ENCODE measurements at regions of chr9 and their contacts with region 1.

Region 1: DNA sequence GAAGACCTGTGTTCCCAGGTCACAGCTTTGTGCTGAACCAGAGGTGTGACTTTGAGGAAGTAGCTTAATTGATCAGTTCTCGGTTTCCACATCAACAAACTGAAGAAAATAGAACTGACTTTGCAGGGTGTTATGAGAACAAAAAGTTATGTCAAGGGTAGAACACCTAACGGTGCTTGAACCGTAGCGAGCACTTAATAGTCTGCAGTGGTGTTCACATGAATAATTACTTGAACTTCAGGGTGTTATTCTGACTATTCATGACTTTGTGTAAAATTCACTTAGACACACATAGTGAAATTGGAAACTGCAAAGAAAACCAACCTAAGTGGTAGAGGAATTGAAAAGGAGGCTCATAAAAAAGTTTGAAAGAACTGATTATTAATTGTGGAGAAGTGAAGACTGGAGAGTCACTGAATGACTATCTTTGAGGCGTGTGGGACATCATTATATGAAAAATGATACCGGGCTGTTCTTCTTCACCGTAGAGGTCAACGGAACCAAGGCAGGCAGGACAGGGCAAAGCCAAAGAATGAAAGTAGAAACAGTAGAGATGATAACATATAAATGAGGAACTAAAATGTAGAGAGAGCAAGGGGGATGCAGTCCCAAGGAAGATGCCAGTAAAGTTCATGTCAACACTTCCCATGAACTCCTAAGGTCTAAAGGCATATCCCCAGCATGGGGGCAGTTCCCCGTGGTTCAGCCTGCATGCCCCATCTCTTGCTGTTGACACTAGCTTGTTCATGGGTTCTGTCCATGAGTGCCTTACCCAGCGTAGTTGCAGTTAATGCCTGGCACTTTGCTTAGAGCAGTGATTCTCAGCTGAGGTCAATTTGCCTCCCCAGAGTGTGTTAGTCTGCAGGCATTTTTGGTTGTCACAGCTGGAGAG is 118.7 kb downstream of the ZNF462 start:
- DNase-seq: peak; percentile 83
- ATAC-seq: peak; percentile 85
- H3K4me3 ChIP-seq: no peak overlapping the region
- H3K27ac ChIP-seq: peak overlapping the region; percentile 28; the same call in 1 of the 2 replicates
- H3K4me1 ChIP-seq: peaks cover 21% of the 10 kb centered on the region
- H3K27me3 ChIP-seq: no peaks in the 10 kb centered on the region; a peak in 1 of 4 replicates
- CTCF ChIP-seq: no peak
- EP300 ChIP-seq: peak; percentile 53 to 80; a peak in 3 of 4 replicates
- POLR2A ChIP-seq: no peak
- RAD21 ChIP-seq: no peak

Region 2: GRCh38 chr9:106753155-106753671 is 228.4 kb before region 1 on chr9:
- CTCF ChIA-PET with region 1: no interaction called
- POLR2A ChIA-PET with region 1: no interaction called
- RAD21 ChIA-PET with region 1: interaction called, 12 read pairs
- SMC1A ChIA-PET with region 1: interaction called, 5 read pairs
- in situ Hi-C with region 1: no loop called
- intact Hi-C with region 1: loop called (anchors 5 kb)
- DNase-seq: peak; percentile 97
- ATAC-seq: peak; percentile 97
- H3K4me3 ChIP-seq: no peak overlapping the region
- H3K27ac ChIP-seq: peak overlapping the region; percentile 47
- H3K4me1 ChIP-seq: peaks cover 15% of the 10 kb centered on the region
- H3K27me3 ChIP-seq: no peaks in the 10 kb centered on the region
- CTCF ChIP-seq: no peak
- EP300 ChIP-seq: peak; percentile 95 to 96; a peak in 3 of 4 replicates
- POLR2A ChIP-seq: no peak
- RAD21 ChIP-seq: no peak

Region 3: DNA sequence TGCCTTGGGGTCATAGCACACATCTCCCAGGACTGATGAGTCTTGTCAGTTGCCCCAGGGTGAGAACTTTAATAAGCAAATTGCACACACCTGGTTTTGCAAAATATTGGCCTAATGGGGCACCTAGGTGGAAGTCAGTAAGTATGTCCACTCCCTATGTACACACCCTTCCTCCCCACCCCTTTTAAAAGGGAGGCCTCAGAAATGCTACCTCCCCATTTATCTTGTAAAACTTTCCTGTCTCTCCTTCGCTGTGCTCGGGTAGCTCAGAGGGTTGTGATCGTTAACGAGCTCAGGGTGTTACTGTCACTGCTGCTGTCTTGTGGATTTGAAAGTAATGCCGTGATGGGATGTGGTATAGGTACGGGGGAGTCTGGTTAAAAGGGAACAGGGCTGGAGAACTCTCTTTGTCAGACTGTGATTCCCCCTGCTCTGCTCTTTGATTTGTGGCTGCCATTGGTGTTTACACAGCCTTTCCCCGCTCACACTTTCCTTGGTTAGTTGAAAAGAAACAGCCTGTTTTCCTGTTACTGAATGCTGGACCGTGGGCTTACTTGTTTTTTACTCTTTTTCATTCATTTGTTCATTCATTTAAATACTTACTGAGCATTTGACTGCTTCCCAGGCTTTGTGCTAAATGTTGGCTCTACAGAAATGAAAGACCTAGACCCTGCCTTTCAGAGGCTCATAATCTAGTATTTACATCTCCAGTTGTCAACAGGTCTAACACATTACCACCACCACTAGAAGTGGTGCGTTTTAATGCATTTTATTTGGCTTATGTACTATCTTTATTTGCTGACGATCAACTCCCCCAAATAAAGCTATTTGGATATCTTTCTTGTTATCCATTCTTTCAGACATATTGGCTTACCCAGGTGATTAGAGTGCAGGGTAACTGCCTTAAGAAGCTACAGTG is 92.3 kb before region 1 on chr9:
- CTCF ChIA-PET with region 1: no interaction called
- POLR2A ChIA-PET with region 1: no interaction called
- RAD21 ChIA-PET with region 1: interaction called, 21 read pairs
- SMC1A ChIA-PET with region 1: interaction called, 3 read pairs
- in situ Hi-C with region 1: no loop called
- intact Hi-C with region 1: no loop called
- DNase-seq: no peak
- ATAC-seq: peak; percentile 66
- H3K4me3 ChIP-seq: no peak overlapping the region
- H3K27ac ChIP-seq: no peak overlapping the region
- H3K4me1 ChIP-seq: no peaks in the 10 kb centered on the region
- H3K27me3 ChIP-seq: no peaks in the 10 kb centered on the region
- CTCF ChIP-seq: no peak
- EP300 ChIP-seq: no peak
- POLR2A ChIP-seq: no peak
- RAD21 ChIP-seq: no peak

Region 4: DNA sequence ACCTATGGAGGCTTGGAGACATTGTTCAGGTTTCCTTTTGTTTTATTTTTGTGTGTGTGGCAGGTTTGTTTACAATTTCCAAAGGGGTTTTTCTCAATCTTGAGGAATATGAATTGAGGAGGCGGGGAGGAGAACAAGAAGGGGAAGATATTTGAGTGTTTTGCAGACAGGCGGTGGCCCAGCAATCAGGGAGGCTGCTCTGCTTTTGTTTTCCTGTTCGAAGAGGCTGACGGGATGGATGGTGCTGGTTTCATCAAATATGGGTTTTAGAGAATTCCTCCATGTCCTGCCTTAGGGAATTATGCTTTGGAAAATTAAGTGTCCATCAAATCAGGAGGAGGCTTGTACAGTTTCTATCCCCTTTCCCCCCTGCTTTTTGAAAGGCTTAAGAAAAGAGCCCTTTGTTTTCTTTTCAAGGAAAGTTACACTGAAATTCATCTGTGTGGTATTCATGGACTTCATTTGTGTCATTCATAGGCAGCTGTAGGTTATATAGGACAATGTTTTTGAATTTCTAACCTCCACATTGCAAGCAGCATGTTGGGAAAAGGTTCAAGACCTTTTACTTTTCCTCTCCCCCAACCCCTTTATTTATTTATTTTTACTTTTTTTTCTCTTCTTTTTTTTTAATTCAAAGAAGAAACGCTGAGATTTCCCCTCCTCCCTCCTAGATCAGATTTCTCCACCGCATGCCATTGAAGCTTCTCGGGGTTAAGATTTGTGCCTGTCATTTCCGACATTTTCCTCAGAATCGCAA is 11.2 kb before region 1 on chr9:
- CTCF ChIA-PET with region 1: interaction called, 11 read pairs
- POLR2A ChIA-PET with region 1: interaction called, 12 read pairs
- RAD21 ChIA-PET with region 1: interaction called, 19 read pairs
- SMC1A ChIA-PET with region 1: interaction called, 45 read pairs
- in situ Hi-C with region 1: no loop called
- intact Hi-C with region 1: loop called (anchors 2 kb)
- DNase-seq: no peak
- ATAC-seq: no peak
- H3K4me3 ChIP-seq: no peak overlapping the region
- H3K27ac ChIP-seq: no peak overlapping the region
- H3K4me1 ChIP-seq: no peaks in the 10 kb centered on the region
- H3K27me3 ChIP-seq: no peaks in the 10 kb centered on the region
- CTCF ChIP-seq: no peak
- EP300 ChIP-seq: no peak
- POLR2A ChIP-seq: no peak
- RAD21 ChIP-seq: no peak

Region 5: DNA sequence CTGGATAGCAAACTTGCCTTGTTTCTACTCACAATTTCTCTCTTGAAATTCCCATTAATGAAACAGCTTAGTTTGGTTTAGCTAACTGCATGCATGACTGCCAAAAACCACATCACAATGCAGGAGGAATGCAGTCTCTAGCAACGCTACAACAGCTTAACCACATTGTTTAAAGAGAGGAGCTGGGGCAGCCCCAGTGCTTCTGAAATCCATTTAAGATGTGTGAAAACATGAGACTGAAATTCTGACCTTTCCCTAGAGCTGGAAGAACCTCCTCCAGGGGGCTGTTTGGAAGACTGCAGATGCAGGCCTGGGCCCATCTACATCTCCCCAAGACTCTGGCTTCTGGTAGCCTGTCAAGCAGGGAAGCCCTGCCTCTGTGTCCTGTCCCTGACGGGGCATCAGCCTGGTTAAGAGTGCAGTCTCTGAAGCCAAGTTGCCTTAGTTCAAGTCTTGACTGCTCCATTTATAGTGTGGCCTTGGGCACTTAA is 38.4 kb after region 1 on chr9:
- CTCF ChIA-PET with region 1: interaction called, 3 read pairs
- POLR2A ChIA-PET with region 1: interaction called, 4 read pairs
- RAD21 ChIA-PET with region 1: interaction called, 16 read pairs
- SMC1A ChIA-PET with region 1: interaction called, 10 read pairs
- in situ Hi-C with region 1: no loop called
- intact Hi-C with region 1: loop called (anchors 5 kb)
- DNase-seq: peak; percentile 50
- ATAC-seq: peak; percentile 84
- H3K4me3 ChIP-seq: no peak overlapping the region
- H3K27ac ChIP-seq: no peak overlapping the region
- H3K4me1 ChIP-seq: peaks cover 6% of the 10 kb centered on the region; the same call in 1 of the 2 replicates
- H3K27me3 ChIP-seq: no peaks in the 10 kb centered on the region
- CTCF ChIP-seq: no peak
- EP300 ChIP-seq: peak; percentile 70 to 78; a peak in 2 of 4 replicates
- POLR2A ChIP-seq: no peak
- RAD21 ChIP-seq: no peak

Region 6: GRCh38 chr9:107044872-107045271 is 63.2 kb after region 1 on chr9:
- CTCF ChIA-PET with region 1: interaction called, 9 read pairs
- POLR2A ChIA-PET with region 1: no interaction called
- RAD21 ChIA-PET with region 1: interaction called, 26 read pairs
- SMC1A ChIA-PET with region 1: interaction called, 14 read pairs
- in situ Hi-C with region 1: no loop called
- intact Hi-C with region 1: no loop called
- DNase-seq: no peak
- ATAC-seq: peak; percentile 8; the same call in 1 of the 3 replicates
- H3K4me3 ChIP-seq: no peak overlapping the region
- H3K27ac ChIP-seq: no peak overlapping the region
- H3K4me1 ChIP-seq: peaks cover 15% of the 10 kb centered on the region
- H3K27me3 ChIP-seq: no peaks in the 10 kb centered on the region
- CTCF ChIP-seq: peak; percentile 4 to 27 (median 8); a peak in 1 of 6 replicates
- EP300 ChIP-seq: no peak
- POLR2A ChIP-seq: no peak
- RAD21 ChIP-seq: no peak

Region 7: GRCh38 chr9:107172160-107172978 is 190.7 kb after region 1 on chr9:
- CTCF ChIA-PET with region 1: interaction called, 6 read pairs
- POLR2A ChIA-PET with region 1: no interaction called
- RAD21 ChIA-PET with region 1: interaction called, 14 read pairs
- SMC1A ChIA-PET with region 1: interaction called, 13 read pairs
- in situ Hi-C with region 1: no loop called
- intact Hi-C with region 1: loop called (anchors 1 kb)
- DNase-seq: peak; percentile 67
- ATAC-seq: peak; percentile 75
- H3K4me3 ChIP-seq: peak overlapping the region; percentile 39; the same call in 1 of the 2 replicates
- H3K27ac ChIP-seq: no peak overlapping the region
- H3K4me1 ChIP-seq: peaks cover 18% of the 10 kb centered on the region
- H3K27me3 ChIP-seq: no peaks in the 10 kb centered on the region
- CTCF ChIP-seq: peak; percentile 83 to 94 (median 94); a peak in 5 of 6 replicates
- EP300 ChIP-seq: no peak
- POLR2A ChIP-seq: no peak
- RAD21 ChIP-seq: peak; percentile 92

Measured in GM12878 (cell line).